ENCODE measurements at regions of chr1 and their contacts with region 1.

Region 1: DNA sequence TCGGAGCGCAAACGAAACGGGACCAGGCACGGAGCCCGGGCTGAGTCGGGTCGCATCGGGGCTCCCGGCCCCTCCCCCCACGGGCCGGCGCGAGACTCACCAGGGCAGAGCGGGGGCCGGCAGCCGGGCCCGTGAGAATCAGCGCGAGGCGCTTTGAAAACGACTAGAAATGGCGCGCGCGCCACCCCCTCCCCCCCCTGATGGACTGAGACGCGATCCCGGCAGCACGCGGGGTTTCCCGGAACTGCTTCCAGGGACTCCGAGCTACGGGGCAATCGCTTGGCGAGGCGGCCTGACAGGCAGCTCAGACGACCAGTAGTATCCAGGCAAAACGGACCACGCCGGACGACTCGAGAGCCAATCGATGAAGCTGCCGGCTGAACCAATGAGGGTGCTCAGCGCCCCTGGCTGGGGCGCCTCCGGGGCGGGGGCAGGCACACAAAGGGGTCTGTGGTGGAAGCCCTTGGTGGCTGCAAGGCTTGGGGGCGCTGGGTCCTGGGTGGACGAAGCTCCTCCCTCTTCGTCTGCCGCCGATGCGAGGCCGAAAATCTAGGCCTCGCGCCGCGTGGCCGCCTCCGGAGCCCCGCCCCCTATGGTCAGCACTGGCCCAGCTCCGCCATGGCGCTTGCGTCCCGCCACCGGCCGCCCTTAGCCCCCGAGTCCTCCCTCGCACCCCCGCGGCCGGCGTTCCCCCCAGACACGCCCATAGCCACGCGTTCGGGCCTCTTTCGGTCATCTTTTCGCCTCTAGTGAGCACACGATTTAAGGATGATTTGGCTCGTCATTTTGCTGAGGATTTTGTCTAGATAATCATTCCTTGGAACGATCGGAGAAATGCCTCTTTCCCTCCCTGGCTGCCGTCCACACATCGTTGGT is at the start of gene HNRNPR:
- DNase-seq: peak; percentile 100
- H3K4me3 ChIP-seq: peak within 1 kb of the TSS; percentile 83
- H3K27ac ChIP-seq: peak within 1 kb of the TSS; percentile 96
- H3K4me1 ChIP-seq: peaks cover 9% of the 10 kb centered on the region
- H3K27me3 ChIP-seq: no peaks in the 10 kb centered on the region
- CTCF ChIP-seq: no peak
- total RNA-seq, gene HNRNPR: 103 to 165 TPM

Region 2: GRCh38 chr1:23035823-23036452 is 308.4 kb before region 1 on chr1:
- intact Hi-C with region 1: no loop called
- DNase-seq: no peak
- H3K4me3 ChIP-seq: no peak overlapping the region
- H3K27ac ChIP-seq: no peak overlapping the region
- H3K4me1 ChIP-seq: no peaks in the 10 kb centered on the region
- H3K27me3 ChIP-seq: no peaks in the 10 kb centered on the region
- CTCF ChIP-seq: no peak

Region 3: DNA sequence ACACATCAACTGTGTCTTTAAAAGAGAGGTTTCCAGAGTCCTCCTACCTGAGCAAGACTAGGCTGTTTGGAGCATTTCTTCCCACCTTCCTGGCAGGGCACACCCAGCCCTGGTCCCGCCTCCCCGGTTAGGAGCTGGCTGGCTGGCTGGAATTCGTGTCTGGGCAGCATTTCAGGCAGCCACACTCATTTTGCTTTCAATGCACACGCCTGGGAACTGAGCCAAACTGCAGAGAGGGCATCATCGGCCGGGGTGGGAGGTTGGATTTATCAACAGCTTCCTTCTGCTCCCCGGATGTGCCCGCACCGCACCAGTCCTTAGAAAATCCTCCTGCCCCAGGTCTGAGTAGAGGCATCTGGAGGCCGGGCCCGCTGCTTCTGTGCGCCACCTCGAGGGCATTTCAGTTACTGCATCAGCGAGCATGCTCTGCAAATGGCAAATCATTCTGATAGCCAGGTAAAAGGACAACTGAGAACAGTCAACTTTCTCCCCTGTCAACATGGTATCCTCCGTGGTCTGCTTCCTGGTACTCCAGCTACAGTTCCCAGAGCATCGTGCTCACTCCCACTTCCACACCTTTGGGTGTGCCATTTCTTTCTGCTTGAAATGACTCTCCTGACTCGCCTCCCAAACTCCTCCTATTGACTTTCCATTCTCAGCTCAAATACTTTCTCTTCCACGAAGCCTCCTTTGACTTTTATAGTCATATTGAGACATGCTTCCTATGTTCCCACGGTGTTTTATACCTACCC is 59.6 kb after region 1 on chr1:
- intact Hi-C with region 1: loop called (anchors 10 kb)
- DNase-seq: peak; percentile 95
- H3K4me3 ChIP-seq: no peak overlapping the region
- H3K27ac ChIP-seq: peak overlapping the region; percentile 74
- H3K4me1 ChIP-seq: peaks cover 10% of the 10 kb centered on the region
- H3K27me3 ChIP-seq: no peaks in the 10 kb centered on the region
- CTCF ChIP-seq: peak; percentile 95